H1 (cell line): ENCODE measurements at regions of chr6 and their contacts with region 1.

Region 1: DNA sequence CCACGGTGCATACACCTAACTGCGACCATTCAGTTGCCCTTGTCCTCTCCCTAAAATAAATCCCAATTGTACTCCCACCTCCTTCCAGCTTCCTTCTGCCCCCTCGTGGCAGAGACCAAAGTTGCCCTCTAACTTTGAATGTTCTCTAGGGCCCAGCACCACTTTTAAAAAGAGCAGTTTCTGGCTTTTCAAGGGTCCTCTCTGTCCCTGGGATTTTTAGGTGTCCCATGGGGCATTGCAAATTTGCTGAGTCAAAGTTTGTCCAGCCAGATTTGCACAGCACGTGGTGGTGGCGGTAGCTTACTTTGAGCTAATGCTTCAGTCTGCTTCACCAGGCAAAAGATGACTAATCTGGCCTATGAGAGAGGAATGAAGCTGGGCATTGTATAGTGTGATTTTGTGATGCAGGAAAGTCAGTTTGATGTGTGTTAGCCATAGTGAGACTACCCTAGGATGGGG is 100.2 kb downstream of the PERP start:
- DNase-seq: peak; percentile 36 to 75
- H3K4me3 ChIP-seq: no peak overlapping the region
- H3K27ac ChIP-seq: no peak overlapping the region
- H3K4me1 ChIP-seq: peaks cover 0 to 5% (median 3%) of the 10 kb centered on the region in 4 experiments; a peak in 4 of 7 replicates
- H3K27me3 ChIP-seq: no peaks in the 10 kb centered on the region
- CTCF ChIP-seq: peak; percentile 60 to 81 (median 73)
- EP300 ChIP-seq: no peak
- POLR2A ChIP-seq: no peak
- RAD21 ChIP-seq: peak; percentile 58 to 70

Region 2: DNA sequence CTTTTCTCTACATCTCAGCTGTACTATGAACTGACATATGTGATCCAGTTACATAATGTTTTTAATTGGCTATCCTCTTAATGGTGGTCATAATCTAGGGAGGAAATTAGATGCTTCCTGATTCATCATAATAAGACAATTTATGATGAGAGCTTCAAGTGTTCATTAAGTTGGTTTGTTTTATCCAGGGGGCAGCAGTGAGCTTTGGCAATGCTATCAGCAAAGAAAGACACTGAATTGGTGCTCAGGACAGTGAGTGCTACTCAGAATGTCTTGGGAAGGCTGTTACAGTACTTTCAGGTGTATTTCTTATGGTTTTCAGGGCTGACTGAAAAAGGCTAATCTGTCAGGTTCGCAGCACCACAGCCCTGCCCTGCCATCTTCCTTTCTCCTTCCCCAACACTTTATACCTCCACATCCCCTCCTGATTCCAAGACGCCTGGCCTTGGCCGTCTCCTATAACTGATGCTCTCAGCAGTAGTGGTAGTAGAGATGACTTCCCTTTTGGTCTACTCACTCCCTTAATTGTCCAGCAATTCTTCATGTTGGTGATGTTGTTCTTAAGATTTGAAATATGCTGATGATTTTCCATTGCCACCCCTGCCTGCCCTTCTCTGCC is 207.0 kb before region 1 on chr6:
- CTCF ChIA-PET with region 1: interaction called, 10 read pairs
- POLR2A ChIA-PET with region 1: no interaction called
- DNase-seq: no peak
- H3K4me3 ChIP-seq: no peak overlapping the region
- H3K27ac ChIP-seq: no peak overlapping the region
- H3K4me1 ChIP-seq: no peaks in the 10 kb centered on the region; a peak in 1 of 7 replicates
- H3K27me3 ChIP-seq: no peaks in the 10 kb centered on the region
- CTCF ChIP-seq: peak in 2 of 3 experiments; percentile 60 to 65; a peak in 3 of 4 replicates
- EP300 ChIP-seq: no peak
- POLR2A ChIP-seq: no peak
- RAD21 ChIP-seq: peak; percentile 66 to 73

Region 3: GRCh38 chr6:137989664-137990063 is 17.4 kb before region 1 on chr6:
- CTCF ChIA-PET with region 1: interaction called, 15 read pairs
- POLR2A ChIA-PET with region 1: no interaction called
- DNase-seq: no peak
- H3K4me3 ChIP-seq: no peak overlapping the region
- H3K27ac ChIP-seq: no peak overlapping the region
- H3K4me1 ChIP-seq: no peaks in the 10 kb centered on the region
- H3K27me3 ChIP-seq: no peaks in the 10 kb centered on the region
- CTCF ChIP-seq: no peak
- EP300 ChIP-seq: no peak
- POLR2A ChIP-seq: no peak
- RAD21 ChIP-seq: no peak

Region 4: DNA sequence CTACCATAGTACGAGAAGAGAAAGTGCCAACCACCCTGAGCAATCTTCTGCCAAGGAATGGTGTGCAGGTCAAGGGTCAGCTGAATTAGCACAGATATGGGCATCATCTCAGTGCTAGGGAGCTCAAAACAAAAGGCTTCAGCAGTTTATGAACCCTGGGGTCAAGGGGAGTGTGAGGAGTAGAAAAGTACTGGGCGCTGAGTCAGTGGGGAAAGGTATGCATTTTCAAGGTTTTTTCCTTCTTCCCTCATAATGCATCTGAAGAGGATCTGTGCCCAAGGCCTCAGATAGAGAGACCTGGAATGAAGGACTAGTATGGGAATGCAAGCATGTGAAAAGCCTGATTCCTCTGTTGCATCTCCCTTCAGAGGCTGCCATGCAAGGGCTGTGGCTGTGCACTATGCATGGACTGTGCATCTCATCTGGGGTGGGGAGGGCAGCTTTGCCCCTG is 18.5 kb after region 1 on chr6:
- CTCF ChIA-PET with region 1: interaction called, 16 read pairs
- POLR2A ChIA-PET with region 1: no interaction called
- DNase-seq: no peak
- H3K4me3 ChIP-seq: no peak overlapping the region
- H3K27ac ChIP-seq: no peak overlapping the region
- H3K4me1 ChIP-seq: no peaks in the 10 kb centered on the region
- H3K27me3 ChIP-seq: no peaks in the 10 kb centered on the region
- CTCF ChIP-seq: no peak
- EP300 ChIP-seq: no peak
- POLR2A ChIP-seq: no peak
- RAD21 ChIP-seq: no peak

Region 5: GRCh38 chr6:138031850-138032249 is 24.8 kb after region 1 on chr6:
- CTCF ChIA-PET with region 1: interaction called, 16 read pairs
- POLR2A ChIA-PET with region 1: no interaction called
- DNase-seq: no peak
- H3K4me3 ChIP-seq: no peak overlapping the region
- H3K27ac ChIP-seq: no peak overlapping the region
- H3K4me1 ChIP-seq: no peaks in the 10 kb centered on the region
- H3K27me3 ChIP-seq: no peaks in the 10 kb centered on the region
- CTCF ChIP-seq: no peak
- EP300 ChIP-seq: no peak
- POLR2A ChIP-seq: no peak
- RAD21 ChIP-seq: no peak